ENCODE measurements at regions of chr12 and their contacts with region 1.

Region 1: GRCh38 chr12:6451348-6452244 is at the start of gene TAPBPL:
- DNase-seq: peak; percentile 71
- H3K4me3 ChIP-seq: peak within 1 kb of the TSS; percentile 44 to 80 (median 61)
- H3K27ac ChIP-seq: peak within 1 kb of the TSS; percentile 71
- H3K4me1 ChIP-seq: peaks cover 23% of the 10 kb centered on the region
- H3K27me3 ChIP-seq: no peaks in the 10 kb centered on the region
- CTCF ChIP-seq: no peak
- total RNA-seq, gene TAPBPL: 4.0 to 5.0 TPM

Region 2: DNA sequence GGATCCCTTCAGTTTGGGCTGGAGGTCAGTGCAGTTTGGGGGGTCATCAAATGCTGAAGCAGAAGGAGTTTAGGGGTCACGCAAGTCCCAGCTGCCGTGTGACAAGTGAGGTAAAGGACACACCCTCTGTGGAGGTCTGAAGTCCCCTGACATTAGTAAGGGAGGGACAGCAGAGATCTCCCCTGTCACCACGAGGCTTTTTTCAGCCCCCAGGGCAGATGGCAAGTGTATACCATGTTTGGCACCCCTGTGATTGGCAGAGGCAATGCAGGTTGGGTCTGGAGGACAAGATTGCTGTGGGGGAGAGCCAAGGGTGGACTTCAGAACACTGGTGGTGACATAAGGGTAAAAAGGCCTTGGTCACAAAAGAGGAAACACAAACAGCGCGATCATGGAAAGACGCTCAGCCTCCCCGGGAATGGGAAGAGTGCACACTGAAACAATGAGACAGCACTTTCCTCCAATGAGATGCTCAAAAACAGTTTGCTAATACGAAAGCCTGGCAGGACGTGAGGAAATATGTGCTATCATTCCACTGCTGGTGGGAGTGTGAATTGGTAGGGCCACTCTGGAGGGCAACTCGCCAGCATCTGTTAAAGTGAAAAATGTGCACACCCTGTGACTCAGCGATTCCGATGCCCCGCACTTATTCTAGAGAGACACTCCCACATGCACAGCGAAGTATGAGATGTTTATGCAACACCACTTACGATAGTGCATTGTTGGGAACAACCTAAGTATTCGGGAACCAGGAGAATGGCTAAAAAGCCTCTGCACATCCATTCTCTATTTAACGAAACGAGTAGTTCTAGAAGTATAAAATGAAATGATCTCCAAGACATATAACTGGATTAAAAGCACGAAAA is 21.2 kb before region 1 on chr12:
- CTCF ChIA-PET with region 1: no interaction called
- dilution Hi-C with region 1: no loop called
- in situ Hi-C with region 1: no loop called
- intact Hi-C with region 1: loop called (anchors 2 kb)
- DNase-seq: peak; percentile 90
- H3K4me3 ChIP-seq: peak overlapping the region; percentile 10 to 31 (median 15)
- H3K27ac ChIP-seq: peak overlapping the region; percentile 75
- H3K4me1 ChIP-seq: peaks cover 16% of the 10 kb centered on the region
- H3K27me3 ChIP-seq: no peaks in the 10 kb centered on the region
- CTCF ChIP-seq: no peak

Region 3: DNA sequence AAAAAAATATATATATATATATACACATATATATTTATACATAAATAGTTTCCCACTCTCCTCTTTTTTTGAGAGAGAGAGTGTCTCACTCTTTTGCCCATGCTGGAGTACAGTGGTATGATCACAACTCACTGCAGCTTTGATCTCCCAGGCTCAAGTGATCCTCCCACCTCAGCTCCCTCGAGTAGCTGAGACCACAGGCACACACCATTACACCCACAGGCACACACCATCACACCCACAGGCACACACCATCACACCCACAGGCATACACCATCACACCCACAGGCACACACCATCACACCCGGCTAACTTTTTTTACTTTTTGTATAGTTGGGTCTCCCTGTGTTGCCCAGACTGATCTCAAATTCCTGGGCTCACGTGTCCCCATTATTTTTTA is 68.6 kb after region 1 on chr12:
- CTCF ChIA-PET with region 1: no interaction called
- dilution Hi-C with region 1: no loop called
- in situ Hi-C with region 1: no loop called
- intact Hi-C with region 1: no loop called
- DNase-seq: no peak
- H3K4me3 ChIP-seq: no peak overlapping the region
- H3K27ac ChIP-seq: no peak overlapping the region
- H3K4me1 ChIP-seq: no peaks in the 10 kb centered on the region
- H3K27me3 ChIP-seq: no peaks in the 10 kb centered on the region
- CTCF ChIP-seq: no peak